Common myeloid progenitor, CD34-positive (primary cell): ENCODE measurements at regions of chr11 and their contacts with region 1.

Region 1: GRCh38 chr11:19071255-19071654 is 10.7 kb upstream of the MRGPRX2 start:
- DNase-seq: peak; percentile 78 to 88 (median 88)
- H3K4me3 ChIP-seq: peak overlapping the region in 5 of 7 experiments; percentile 15 to 75 (median 45)
- H3K27ac ChIP-seq: no peak overlapping the region
- H3K4me1 ChIP-seq: no peaks in the 10 kb centered on the region
- H3K27me3 ChIP-seq: no peaks in the 10 kb centered on the region

Region 2: DNA sequence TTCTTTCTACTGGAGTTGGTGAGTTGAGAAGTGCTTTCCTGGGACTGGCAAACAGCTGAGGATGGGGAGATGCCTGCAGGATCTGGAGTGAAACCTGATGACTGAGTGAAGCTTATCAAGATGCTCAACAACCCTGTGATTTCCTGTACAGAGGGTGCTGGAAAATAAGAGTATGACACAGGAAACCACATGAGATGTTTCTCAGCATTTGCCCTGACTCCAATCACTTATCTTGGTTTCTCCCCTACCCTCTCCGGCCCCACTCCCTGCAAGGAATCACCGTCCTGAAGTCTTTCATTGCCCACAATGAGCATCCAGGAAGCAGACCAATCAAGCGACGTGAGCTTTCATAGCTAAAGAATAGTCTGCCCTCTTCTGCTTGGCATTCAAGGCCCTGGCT is 10.6 kb before region 1 on chr11 and contains the start of gene MRGPRX2:
- CTCF ChIA-PET with region 1: interaction called, 22 read pairs
- POLR2A ChIA-PET with region 1: no interaction called
- DNase-seq: peak; percentile 21 to 62 (median 49)
- H3K4me3 ChIP-seq: no peak within 1 kb of the TSS
- H3K27ac ChIP-seq: no peak within 1 kb of the TSS
- H3K4me1 ChIP-seq: peaks cover 0 to 20% (median 8%) of the 10 kb centered on the region in 4 experiments
- H3K27me3 ChIP-seq: peaks cover 0 to 13% (median 0%) of the 10 kb centered on the region in 5 experiments